PC-3 (cell line): ENCODE measurements at regions of chr15 and their contacts with region 1.

Region 1: GRCh38 chr15:48352474-48353072 is 21.3 kb downstream of the DUT start:
- DNase-seq: peak; percentile 82
- ATAC-seq: peak; percentile 81
- H3K4me3 ChIP-seq: no peak overlapping the region
- H3K27ac ChIP-seq: no peak overlapping the region
- H3K4me1 ChIP-seq: no peaks in the 10 kb centered on the region; the same call in 1 of the 2 replicates
- H3K27me3 ChIP-seq: no peaks in the 10 kb centered on the region
- CTCF ChIP-seq: peak; percentile 85

Region 2: DNA sequence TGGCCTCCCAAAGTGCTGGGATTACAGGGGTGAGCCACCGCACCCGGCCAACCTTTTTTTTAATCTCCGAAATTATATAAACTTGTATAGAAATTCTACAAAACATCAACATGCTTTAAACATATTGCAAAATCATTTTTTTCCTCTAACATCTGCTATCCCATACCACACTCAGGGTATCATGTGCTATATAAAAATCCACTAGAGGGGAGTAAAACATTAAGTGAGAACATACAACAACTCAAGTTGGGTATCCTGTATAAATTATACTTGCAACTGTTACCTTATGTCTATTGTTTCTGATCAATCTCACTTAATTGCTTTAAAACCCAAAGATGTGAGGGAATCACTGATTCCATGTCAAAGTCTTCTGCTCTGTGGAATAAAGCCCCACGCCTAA is 364.9 kb after region 1 on chr15:
- CTCF ChIA-PET with region 1: no interaction called
- POLR2A ChIA-PET with region 1: no interaction called
- intact Hi-C with region 1: loop called (anchors 10 kb)
- DNase-seq: peak; percentile 44
- ATAC-seq: peak; percentile 73
- H3K4me3 ChIP-seq: no peak overlapping the region
- H3K27ac ChIP-seq: no peak overlapping the region
- H3K4me1 ChIP-seq: peaks cover 11% of the 10 kb centered on the region
- H3K27me3 ChIP-seq: no peaks in the 10 kb centered on the region
- CTCF ChIP-seq: peak; percentile 53